Natural killer cell (primary cell): ENCODE measurements at regions of chrX and their contacts with region 1.

Region 1: GRCh38 chrX:17689971-17690409 is 47.3 kb upstream of the SCML1 start:
- DNase-seq: peak in 1 of 2 donors; percentile 69
- ATAC-seq: peak in 2 of 3 donors; percentile 47 to 68
- H3K4me3 ChIP-seq: no peak overlapping the region
- H3K4me3 Mint-ChIP-seq: no peak overlapping the region
- H3K27ac ChIP-seq: no peak overlapping the region
- H3K27ac Mint-ChIP-seq: no peak overlapping the region
- H3K4me1 ChIP-seq: no peaks in the 10 kb centered on the region
- H3K4me1 Mint-ChIP-seq: no peaks in the 10 kb centered on the region
- H3K27me3 ChIP-seq: no peaks in the 10 kb centered on the region
- H3K27me3 Mint-ChIP-seq: peaks cover 0 to 28% of the 10 kb centered on the region in 2 donors
- CTCF ChIP-seq: peak; percentile 21

Region 2: DNA sequence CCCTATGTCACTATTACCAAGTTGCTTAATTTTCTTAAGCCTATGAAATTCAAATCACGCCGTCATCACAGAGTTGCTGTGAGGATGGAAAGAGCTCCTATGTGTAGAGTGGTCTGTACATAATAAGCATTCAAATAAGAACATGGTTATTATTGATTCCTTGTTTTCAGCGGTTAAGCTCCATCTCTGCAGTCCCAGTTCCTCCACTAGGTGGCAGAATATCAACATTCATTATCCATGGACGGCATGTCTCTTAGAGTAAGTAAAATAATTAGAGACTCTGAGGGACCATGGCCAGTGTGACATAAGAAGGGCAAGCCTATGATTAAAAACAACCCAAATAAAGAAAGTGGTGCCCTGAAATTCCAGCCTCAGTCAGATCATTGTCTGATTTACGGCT is 447.5 kb before region 1 on chrX:
- intact Hi-C with region 1: loop called (anchors 1 kb)
- DNase-seq: peak in 1 of 2 donors; percentile 54
- ATAC-seq: peak in 1 of 3 donors; percentile 49
- H3K4me3 ChIP-seq: no peak overlapping the region
- H3K4me3 Mint-ChIP-seq: no peak overlapping the region
- H3K27ac ChIP-seq: no peak overlapping the region
- H3K27ac Mint-ChIP-seq: no peak overlapping the region
- H3K4me1 ChIP-seq: no peaks in the 10 kb centered on the region
- H3K4me1 Mint-ChIP-seq: no peaks in the 10 kb centered on the region
- H3K27me3 ChIP-seq: no peaks in the 10 kb centered on the region
- H3K27me3 Mint-ChIP-seq: peaks cover 0 to 14% of the 10 kb centered on the region in 2 donors
- CTCF ChIP-seq: peak; percentile 55

Region 3: GRCh38 chrX:17535229-17535628 is 154.8 kb before region 1 on chrX:
- intact Hi-C with region 1: loop called (anchors 5 kb)
- DNase-seq: peak in 1 of 2 donors; percentile 49
- ATAC-seq: no peak
- H3K4me3 ChIP-seq: no peak overlapping the region
- H3K4me3 Mint-ChIP-seq: no peak overlapping the region
- H3K27ac ChIP-seq: no peak overlapping the region
- H3K27ac Mint-ChIP-seq: no peak overlapping the region
- H3K4me1 ChIP-seq: no peaks in the 10 kb centered on the region
- H3K4me1 Mint-ChIP-seq: no peaks in the 10 kb centered on the region
- H3K27me3 ChIP-seq: no peaks in the 10 kb centered on the region
- H3K27me3 Mint-ChIP-seq: peaks cover 20 to 23% of the 10 kb centered on the region in 2 donors
- CTCF ChIP-seq: no peak

Region 4: GRCh38 chrX:17655211-17656034 is 34.6 kb before region 1 on chrX:
- intact Hi-C with region 1: no loop called
- DNase-seq: peak in 1 of 2 donors; percentile 3
- ATAC-seq: no peak
- H3K4me3 ChIP-seq: peak overlapping the region; percentile 13
- H3K4me3 Mint-ChIP-seq: peak overlapping the region; percentile 58
- H3K27ac ChIP-seq: no peak overlapping the region
- H3K27ac Mint-ChIP-seq: no peak overlapping the region
- H3K4me1 ChIP-seq: peaks cover 19% of the 10 kb centered on the region
- H3K4me1 Mint-ChIP-seq: peaks cover 11 to 14% of the 10 kb centered on the region in 2 donors
- H3K27me3 ChIP-seq: peaks cover 4% of the 10 kb centered on the region
- H3K27me3 Mint-ChIP-seq: peaks cover 14 to 36% of the 10 kb centered on the region in 2 donors
- CTCF ChIP-seq: no peak